Heart right ventricle (tissue), 16 donors: ENCODE measurements at regions of chr18 and their contacts with region 1.

Region 1: GRCh38 chr18:5890331-5891183 is 4.8 kb downstream of the TMEM200C start:
- DNase-seq: peak in 1 of 2 donors; percentile 46
- ATAC-seq: peak; percentile 68 to 94 (median 82)
- H3K4me3 ChIP-seq: peak overlapping the region; percentile 28 to 69 (median 49)
- H3K27ac ChIP-seq: peak overlapping the region in 1 of 10 donors; percentile 1
- H3K4me1 ChIP-seq: peaks cover 0 to 18% (median 7%) of the 10 kb centered on the region in 9 donors
- H3K27me3 ChIP-seq: peaks cover 20 to 96% (median 59%) of the 10 kb centered on the region in 7 donors
- CTCF ChIP-seq: peak; percentile 37 to 82 (median 63)

Region 2: DNA sequence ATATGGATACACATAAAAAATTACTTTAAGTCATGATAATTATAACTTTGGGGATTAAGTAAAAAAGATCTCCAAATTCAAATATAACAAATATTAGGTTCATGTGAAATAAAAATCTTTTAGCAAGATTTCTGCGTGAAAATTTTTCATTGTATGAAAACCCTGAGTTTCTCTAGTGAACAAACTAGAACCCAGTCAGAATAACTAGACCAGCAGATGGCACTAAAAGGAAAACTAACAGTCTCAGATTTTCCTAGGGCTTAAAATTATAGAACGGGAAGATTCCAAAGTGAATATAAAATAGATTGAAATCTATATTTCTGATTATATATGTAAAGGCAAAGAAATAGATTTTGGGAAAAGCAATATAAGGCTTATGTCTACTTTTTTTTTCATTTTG is 38.6 kb before region 1 on chr18:
- intact Hi-C with region 1: loop called in 1 of 10 experiments (anchors 1 kb)
- DNase-seq: no peak
- ATAC-seq: no peak
- H3K4me3 ChIP-seq: no peak overlapping the region
- H3K27ac ChIP-seq: no peak overlapping the region
- H3K4me1 ChIP-seq: no peaks in the 10 kb centered on the region
- H3K27me3 ChIP-seq: peaks cover 0 to 73% (median 30%) of the 10 kb centered on the region in 7 donors
- CTCF ChIP-seq: peak in 3 of 9 donors; percentile 11 to 36 (median 17)

Region 3: GRCh38 chr18:6120820-6121279 is 230.3 kb after region 1 on chr18:
- intact Hi-C with region 1: loop called in 2 of 10 experiments (anchors 5 to 10 kb)
- DNase-seq: peak in 1 of 2 donors; percentile 26
- ATAC-seq: peak; percentile 49 to 98 (median 94)
- H3K4me3 ChIP-seq: no peak overlapping the region
- H3K27ac ChIP-seq: peak overlapping the region in 7 of 10 donors; percentile 9 to 69 (median 54)
- H3K4me1 ChIP-seq: peaks cover 3 to 38% (median 9%) of the 10 kb centered on the region in 9 donors
- H3K27me3 ChIP-seq: no peaks in the 10 kb centered on the region
- CTCF ChIP-seq: no peak

Region 4: DNA sequence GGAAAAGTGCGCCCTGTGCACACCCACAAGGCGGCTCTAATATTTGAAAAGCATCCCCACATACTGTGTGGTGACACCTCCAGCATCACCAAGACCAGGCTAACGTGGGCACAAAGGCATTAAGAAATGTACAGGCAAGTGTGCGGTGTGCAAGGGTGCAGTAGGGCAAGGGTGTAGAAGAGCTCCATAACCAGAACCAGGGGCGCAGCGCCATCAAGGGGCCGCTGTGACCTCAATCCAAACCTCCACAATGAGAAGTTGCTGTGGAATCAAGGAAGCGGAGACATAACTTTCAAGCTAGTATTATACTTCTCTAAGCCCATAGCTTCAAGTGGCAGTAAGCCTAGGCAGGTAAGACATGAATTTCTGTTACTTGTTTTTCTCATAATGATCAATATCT is 511.1 kb after region 1 on chr18:
- intact Hi-C with region 1: loop called in 2 of 10 experiments (anchors 10 kb)
- DNase-seq: no peak
- ATAC-seq: no peak
- H3K4me3 ChIP-seq: no peak overlapping the region
- H3K27ac ChIP-seq: no peak overlapping the region
- H3K4me1 ChIP-seq: peaks cover 0 to 10% (median 0%) of the 10 kb centered on the region in 9 donors
- H3K27me3 ChIP-seq: peaks cover 0 to 7% (median 0%) of the 10 kb centered on the region in 7 donors
- CTCF ChIP-seq: peak in 5 of 9 donors; percentile 14 to 48 (median 36)

Region 5: DNA sequence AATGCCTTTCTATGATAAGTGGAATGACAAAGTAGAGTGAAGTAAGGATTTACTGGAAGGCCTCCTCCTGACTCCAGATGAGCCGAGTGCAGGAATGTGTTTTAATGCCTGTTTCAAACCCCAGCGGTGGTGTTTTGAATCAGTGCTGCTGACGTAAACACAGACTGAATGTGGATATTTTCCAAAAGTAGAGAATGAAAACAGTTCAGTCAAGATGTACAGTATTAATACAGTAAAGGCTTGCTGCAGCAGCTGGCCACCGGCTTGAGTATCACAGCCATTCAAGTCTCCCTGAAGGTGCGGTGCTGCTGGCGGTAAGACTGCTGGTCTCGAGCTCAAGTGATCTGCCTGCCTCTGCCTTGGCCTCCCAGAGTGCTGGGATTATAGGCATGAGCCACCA is 885.6 kb after region 1 on chr18:
- intact Hi-C with region 1: loop called in 1 of 10 experiments (anchors 10 kb)
- DNase-seq: no peak
- ATAC-seq: peak in 4 of 8 donors; percentile 17 to 63 (median 34)
- H3K4me3 ChIP-seq: peak overlapping the region in 1 of 10 donors; percentile 25
- H3K27ac ChIP-seq: peak overlapping the region in 5 of 10 donors; percentile 17 to 57 (median 35)
- H3K4me1 ChIP-seq: peaks cover 3 to 10% (median 4%) of the 10 kb centered on the region in 9 donors
- H3K27me3 ChIP-seq: no peaks in the 10 kb centered on the region
- CTCF ChIP-seq: no peak